ENCODE measurements at regions of chr21 and their contacts with region 1.

Region 1: GRCh38 chr21:14686466-14687267 is 140.6 kb upstream of the SAMSN1 start:
- DNase-seq: no peak
- H3K4me3 Mint-ChIP-seq: no peak overlapping the region
- H3K27ac Mint-ChIP-seq: no peak overlapping the region
- H3K4me1 Mint-ChIP-seq: peaks cover 44% of the 10 kb centered on the region
- H3K27me3 Mint-ChIP-seq: no peaks in the 10 kb centered on the region

Region 2: GRCh38 chr21:14657241-14658008 is 29.2 kb before region 1 on chr21:
- intact Hi-C with region 1: no loop called
- DNase-seq: no peak
- H3K4me3 Mint-ChIP-seq: no peak overlapping the region
- H3K27ac Mint-ChIP-seq: no peak overlapping the region
- H3K4me1 Mint-ChIP-seq: peaks cover 7% of the 10 kb centered on the region
- H3K27me3 Mint-ChIP-seq: peaks cover 3% of the 10 kb centered on the region

Region 3: GRCh38 chr21:14675774-14676530 is 10.7 kb before region 1 on chr21:
- intact Hi-C with region 1: loop called (anchors 1 kb)
- DNase-seq: no peak
- H3K4me3 Mint-ChIP-seq: peak overlapping the region; percentile 52
- H3K27ac Mint-ChIP-seq: peak overlapping the region; percentile 97
- H3K4me1 Mint-ChIP-seq: peaks cover 47% of the 10 kb centered on the region
- H3K27me3 Mint-ChIP-seq: no peaks in the 10 kb centered on the region

Region 4: GRCh38 chr21:14842601-14843000 is 155.9 kb after region 1 on chr21:
- intact Hi-C with region 1: no loop called
- DNase-seq: no peak
- H3K4me3 Mint-ChIP-seq: no peak overlapping the region
- H3K27ac Mint-ChIP-seq: no peak overlapping the region
- H3K4me1 Mint-ChIP-seq: no peaks in the 10 kb centered on the region
- H3K27me3 Mint-ChIP-seq: peaks cover 5% of the 10 kb centered on the region